BJ (cell line): ENCODE measurements at regions of chr1 and their contacts with region 1.

Region 1: GRCh38 chr1:227946624-227947385 is 927 bp downstream of the WNT9A start:
- DNase-seq: no peak
- H3K4me3 ChIP-seq: peak overlapping the region; percentile 40
- H3K27me3 ChIP-seq: no peaks in the 10 kb centered on the region
- CTCF ChIP-seq: peak; percentile 62

Region 2: DNA sequence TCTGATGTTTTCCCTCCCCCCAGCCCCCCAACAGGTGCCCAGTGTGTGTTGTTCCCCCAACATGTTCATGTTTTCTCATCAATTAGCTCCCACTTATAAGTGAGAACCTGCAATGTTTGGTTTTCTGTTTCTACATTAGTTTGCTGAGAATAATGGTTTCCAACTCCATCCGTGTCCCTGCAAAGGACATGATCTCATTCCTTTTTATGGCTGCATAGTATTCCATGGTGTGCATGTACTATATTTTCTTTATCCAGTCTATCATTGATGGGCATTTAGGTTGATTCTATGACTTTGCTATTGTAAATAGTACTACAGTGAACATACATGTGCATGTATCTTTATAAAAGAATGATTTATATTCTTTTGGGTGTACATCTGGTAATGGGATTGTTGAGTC is 358.8 kb before region 1 on chr1:
- CTCF ChIA-PET with region 1: no interaction called
- POLR2A ChIA-PET with region 1: no interaction called
- DNase-seq: no peak
- H3K4me3 ChIP-seq: no peak overlapping the region
- H3K27me3 ChIP-seq: no peaks in the 10 kb centered on the region
- CTCF ChIP-seq: no peak

Region 3: DNA sequence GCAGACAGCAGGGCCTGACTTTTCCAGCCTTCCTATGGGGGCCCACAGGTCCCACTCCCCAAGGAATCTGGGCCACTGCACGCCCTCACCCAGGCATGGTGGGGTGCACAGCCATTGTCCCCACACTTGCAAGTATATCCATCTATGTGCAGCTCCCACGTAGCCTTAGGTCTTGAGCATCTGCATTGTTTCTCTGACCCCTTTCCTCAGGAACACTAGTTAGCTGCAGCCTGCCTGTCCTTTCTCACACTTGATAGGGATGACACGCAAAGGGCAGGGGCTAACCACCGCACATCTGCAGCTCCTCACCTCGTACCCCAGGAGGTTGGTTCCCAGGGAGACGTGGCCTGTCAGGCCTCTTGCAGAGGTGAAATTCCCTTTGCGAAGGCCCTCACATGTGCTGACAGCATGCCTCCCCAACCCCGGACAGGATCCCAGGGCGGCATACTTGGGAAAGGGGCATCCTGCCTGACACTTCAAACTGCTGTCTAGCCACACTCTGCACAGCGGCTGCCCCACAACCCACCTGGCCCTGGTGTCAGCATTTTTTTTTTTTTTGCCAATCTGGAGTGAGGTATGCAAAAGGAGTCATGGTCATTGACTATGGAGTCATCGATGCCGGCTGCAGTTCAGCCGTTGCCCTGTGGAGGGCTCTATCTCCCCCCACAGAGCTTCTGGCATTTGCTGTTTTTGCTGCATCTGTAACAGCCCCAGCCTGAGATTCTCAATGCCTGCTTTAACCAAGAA is 216.8 kb before region 1 on chr1:
- CTCF ChIA-PET with region 1: interaction called, 15 read pairs
- POLR2A ChIA-PET with region 1: interaction called, 3 read pairs
- DNase-seq: peak; percentile 6
- H3K4me3 ChIP-seq: no peak overlapping the region
- H3K27me3 ChIP-seq: no peaks in the 10 kb centered on the region
- CTCF ChIP-seq: peak; percentile 89

Region 4: DNA sequence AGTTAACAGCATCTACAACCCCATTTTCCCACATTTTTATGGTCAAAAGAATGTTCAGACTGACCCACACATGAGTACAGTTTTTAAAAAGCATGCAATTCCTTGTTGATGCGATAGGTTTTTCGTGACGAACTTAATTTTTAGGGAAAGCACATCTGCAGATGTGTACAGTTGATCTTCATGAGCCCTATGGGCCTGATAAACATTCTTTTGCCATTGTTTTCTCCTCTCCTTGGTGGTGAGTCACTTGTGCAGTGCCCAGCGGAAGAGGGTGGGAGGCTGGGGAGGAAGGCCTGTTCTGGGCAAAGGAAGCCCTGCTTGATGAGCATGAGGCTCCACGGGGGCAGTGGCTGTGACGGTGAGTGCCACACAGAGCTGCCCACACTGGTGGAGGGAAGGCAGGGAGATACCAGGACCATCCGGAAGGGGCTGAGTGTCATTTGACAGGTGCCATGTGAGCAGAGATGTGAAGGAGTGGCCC is 141.0 kb after region 1 on chr1:
- CTCF ChIA-PET with region 1: no interaction called
- POLR2A ChIA-PET with region 1: no interaction called
- DNase-seq: peak; percentile 68
- H3K4me3 ChIP-seq: no peak overlapping the region
- H3K27me3 ChIP-seq: no peaks in the 10 kb centered on the region
- CTCF ChIP-seq: 0 out of 2 replicates have a peak, but pooled peaks have one; percentile 15

Region 5: DNA sequence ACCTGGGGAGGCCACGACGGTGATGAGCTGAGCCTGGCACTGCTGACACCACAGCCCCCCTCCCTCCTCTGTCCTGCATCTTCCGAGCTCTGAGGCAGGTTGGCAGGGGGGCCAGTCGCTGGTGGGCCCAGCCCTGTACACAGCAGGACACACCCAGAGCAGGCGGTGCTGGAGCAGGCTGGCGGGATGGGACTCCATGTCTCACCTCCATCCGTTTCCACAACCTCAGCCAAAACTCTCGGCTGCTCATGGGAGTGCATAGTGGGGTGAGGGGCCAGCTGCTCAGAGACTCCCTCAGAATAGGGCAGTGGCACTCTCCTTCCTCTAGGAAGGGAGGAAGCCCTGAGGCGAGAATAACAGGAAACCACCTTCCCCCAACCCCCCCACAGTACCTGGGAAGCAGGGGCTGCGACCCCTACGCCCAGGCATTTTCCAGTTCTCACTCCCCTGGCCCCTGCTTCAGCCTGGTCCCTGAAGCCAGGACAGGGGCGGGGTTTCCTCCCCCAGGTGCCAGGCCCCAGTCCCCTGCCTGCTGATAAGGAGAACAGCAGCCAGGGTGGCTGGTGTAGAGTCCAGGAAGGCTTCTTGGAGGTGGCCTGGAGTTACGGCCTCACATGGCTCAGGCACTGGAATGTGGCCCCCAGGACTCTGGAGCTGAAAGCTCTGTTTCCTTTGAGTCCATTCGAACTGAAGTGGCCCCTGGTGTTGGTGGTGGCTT is 215.6 kb after region 1 on chr1:
- CTCF ChIA-PET with region 1: no interaction called
- POLR2A ChIA-PET with region 1: no interaction called
- DNase-seq: no peak
- H3K4me3 ChIP-seq: no peak overlapping the region
- H3K27me3 ChIP-seq: peaks cover 9% of the 10 kb centered on the region
- CTCF ChIP-seq: no peak